CD4-positive, alpha-beta memory T cell (primary cell): ENCODE measurements at regions of chr14 and their contacts with region 1.

Region 1: DNA sequence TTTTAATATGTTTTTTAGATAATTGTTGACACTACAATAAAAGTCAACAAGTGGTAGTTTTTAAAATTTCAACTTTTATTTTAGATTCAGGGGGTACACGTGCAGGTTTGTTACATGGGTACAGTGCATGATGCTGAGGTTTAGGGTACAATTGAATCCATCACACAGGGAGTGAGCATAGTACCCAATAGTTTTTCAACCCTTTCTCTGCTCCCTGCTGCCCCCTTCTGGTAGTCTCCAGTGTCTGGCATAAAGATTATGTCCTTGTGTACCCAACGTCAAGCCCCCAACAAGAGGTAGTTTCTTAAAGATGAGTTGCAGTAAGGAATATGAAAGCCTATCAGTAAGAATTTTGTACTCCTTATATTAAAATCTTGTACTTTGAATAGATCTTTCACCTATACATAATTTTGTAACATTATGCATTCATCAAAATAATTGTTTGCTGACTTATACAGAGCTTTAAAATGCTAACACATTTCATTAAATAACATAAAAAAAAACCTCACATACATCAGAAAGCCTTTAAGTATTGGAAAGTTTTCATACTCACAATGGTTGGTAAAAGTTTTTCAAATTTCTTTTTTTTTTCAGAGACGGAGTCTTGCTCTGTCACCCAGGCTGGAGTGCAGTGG is 5.4 kb upstream of the RALGAPA1 start:
- DNase-seq: peak; percentile 66 to 78 (median 73)
- H3K4me3 ChIP-seq: no peak overlapping the region
- H3K4me3 Mint-ChIP-seq: no peak overlapping the region
- H3K27ac ChIP-seq: no peak overlapping the region
- H3K27ac Mint-ChIP-seq: no peak overlapping the region
- H3K4me1 ChIP-seq: no peaks in the 10 kb centered on the region
- H3K4me1 Mint-ChIP-seq: peaks cover 0 to 3% (median under 1%) of the 10 kb centered on the region in 4 donors
- H3K27me3 ChIP-seq: no peaks in the 10 kb centered on the region
- H3K27me3 Mint-ChIP-seq: peaks cover 0 to 2% of the 10 kb centered on the region in 2 donors

Region 2: DNA sequence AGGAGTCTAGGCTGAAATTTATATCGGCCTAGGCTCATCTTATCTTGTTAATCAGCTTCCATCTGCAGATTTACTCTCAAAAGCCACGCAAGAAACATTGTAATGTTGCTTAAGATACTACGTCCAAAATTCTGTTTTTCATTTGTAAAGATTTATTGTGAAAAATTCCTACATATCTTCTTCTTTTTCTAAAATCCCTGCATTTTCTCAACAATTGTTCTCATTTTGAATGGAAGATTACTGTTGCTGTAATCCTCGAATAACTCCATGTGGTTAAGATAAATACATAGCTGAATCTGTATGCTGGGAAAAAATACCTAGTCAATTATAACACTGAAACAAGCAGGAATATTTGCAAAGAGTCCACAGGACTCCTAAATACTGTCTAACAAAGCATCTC is 264.9 kb before region 1 on chr14:
- CTCF ChIA-PET with region 1: no interaction called
- POLR2A ChIA-PET with region 1: no interaction called
- intact Hi-C with region 1: no loop called
- DNase-seq: no peak
- H3K4me3 ChIP-seq: no peak overlapping the region
- H3K4me3 Mint-ChIP-seq: no peak overlapping the region
- H3K27ac ChIP-seq: no peak overlapping the region
- H3K27ac Mint-ChIP-seq: no peak overlapping the region
- H3K4me1 ChIP-seq: no peaks in the 10 kb centered on the region
- H3K4me1 Mint-ChIP-seq: no peaks in the 10 kb centered on the region
- H3K27me3 ChIP-seq: no peaks in the 10 kb centered on the region
- H3K27me3 Mint-ChIP-seq: no peaks in the 10 kb centered on the region

Region 3: DNA sequence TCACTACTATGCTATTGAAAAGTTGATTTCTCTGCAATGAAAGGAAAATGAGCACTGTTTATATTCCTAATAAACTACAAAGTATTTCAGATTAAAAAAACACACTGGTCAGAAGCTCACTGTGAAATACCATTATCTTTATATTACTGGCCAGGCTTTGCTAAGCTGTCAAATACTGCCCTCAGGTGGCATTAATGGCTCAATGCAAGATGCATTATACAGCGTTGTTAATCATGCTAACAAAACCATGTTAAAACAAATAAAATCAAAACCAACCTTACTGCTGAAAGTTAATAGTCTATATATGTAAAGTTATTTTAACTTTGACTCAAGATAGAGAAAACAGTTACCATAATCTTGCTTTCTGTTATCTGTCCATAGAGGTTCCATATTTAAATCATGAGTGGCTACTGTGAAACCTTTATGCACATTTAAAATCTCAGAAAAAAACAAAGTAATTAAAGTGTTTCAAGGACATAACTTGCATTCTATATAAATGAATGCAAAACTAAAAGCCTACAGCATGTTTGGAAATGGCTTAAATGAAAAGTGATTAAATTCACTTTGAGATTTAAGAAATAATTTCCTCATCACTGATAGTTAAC is 127.1 kb before region 1 on chr14:
- CTCF ChIA-PET with region 1: interaction called, 4 read pairs
- POLR2A ChIA-PET with region 1: no interaction called
- intact Hi-C with region 1: loop called (anchors 5 kb)
- DNase-seq: peak; percentile 6 to 43 (median 9)
- H3K4me3 ChIP-seq: no peak overlapping the region
- H3K4me3 Mint-ChIP-seq: no peak overlapping the region
- H3K27ac ChIP-seq: no peak overlapping the region
- H3K27ac Mint-ChIP-seq: no peak overlapping the region
- H3K4me1 ChIP-seq: no peaks in the 10 kb centered on the region
- H3K4me1 Mint-ChIP-seq: peaks cover 0 to 5% (median 4%) of the 10 kb centered on the region in 4 donors
- H3K27me3 ChIP-seq: no peaks in the 10 kb centered on the region
- H3K27me3 Mint-ChIP-seq: no peaks in the 10 kb centered on the region